ENCODE measurements at regions of chr5 and their contacts with region 1.

Region 1: GRCh38 chr5:149035372-149035790 is 27.5 kb downstream of the SH3TC2 start:
- DNase-seq: peak; percentile 74 to 83
- ATAC-seq: peak; percentile 91 to 98 (median 94)
- H3K4me3 ChIP-seq: no peak overlapping the region
- H3K27ac ChIP-seq: no peak overlapping the region
- H3K4me1 ChIP-seq: peaks cover 4% of the 10 kb centered on the region
- H3K27me3 ChIP-seq: no peaks in the 10 kb centered on the region
- CTCF ChIP-seq: peak; percentile 92

Region 2: DNA sequence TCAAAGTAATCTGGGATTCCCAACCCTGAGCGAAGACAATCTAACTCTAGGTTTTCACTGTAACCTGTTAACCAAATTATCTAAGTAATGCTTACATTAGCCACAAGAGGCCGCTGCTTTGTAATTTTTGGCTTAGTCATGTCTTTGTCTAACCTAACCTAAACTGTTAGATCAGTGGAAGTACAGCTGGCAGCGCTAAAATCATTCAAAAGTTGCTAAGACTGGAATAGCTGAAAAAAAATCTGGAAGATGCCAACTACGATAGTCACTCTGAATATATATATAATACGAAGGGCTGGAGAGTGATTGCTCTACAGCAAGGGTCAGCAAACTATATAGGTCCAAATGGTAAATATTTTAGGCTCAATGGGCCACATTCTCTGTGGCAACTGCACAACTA is 591.4 kb before region 1 on chr5:
- intact Hi-C with region 1: loop called (anchors 5 to 10 kb)
- DNase-seq: no peak
- ATAC-seq: peak; percentile 74 to 96 (median 86)
- H3K4me3 ChIP-seq: no peak overlapping the region
- H3K27ac ChIP-seq: no peak overlapping the region
- H3K4me1 ChIP-seq: peaks cover 4% of the 10 kb centered on the region
- H3K27me3 ChIP-seq: no peaks in the 10 kb centered on the region
- CTCF ChIP-seq: peak; percentile 80

Region 3: GRCh38 chr5:148740966-148741742 is 294.2 kb before region 1 on chr5:
- intact Hi-C with region 1: loop called in 1 of 2 experiments (anchors 2 kb)
- DNase-seq: no peak
- ATAC-seq: peak; percentile 90 to 95 (median 91)
- H3K4me3 ChIP-seq: peak overlapping the region; percentile 39
- H3K27ac ChIP-seq: peak overlapping the region; percentile 56
- H3K4me1 ChIP-seq: peaks cover 8% of the 10 kb centered on the region
- H3K27me3 ChIP-seq: no peaks in the 10 kb centered on the region
- CTCF ChIP-seq: peak; percentile 82

Region 4: GRCh38 chr5:148912714-148913398 is 122.5 kb before region 1 on chr5:
- intact Hi-C with region 1: loop called in 1 of 2 experiments (anchors 5 kb)
- DNase-seq: no peak
- ATAC-seq: peak in 3 of 4 donors; percentile 44 to 67 (median 66)
- H3K4me3 ChIP-seq: no peak overlapping the region
- H3K27ac ChIP-seq: no peak overlapping the region
- H3K4me1 ChIP-seq: peaks cover 15% of the 10 kb centered on the region
- H3K27me3 ChIP-seq: no peaks in the 10 kb centered on the region
- CTCF ChIP-seq: peak; percentile 39

Region 5: DNA sequence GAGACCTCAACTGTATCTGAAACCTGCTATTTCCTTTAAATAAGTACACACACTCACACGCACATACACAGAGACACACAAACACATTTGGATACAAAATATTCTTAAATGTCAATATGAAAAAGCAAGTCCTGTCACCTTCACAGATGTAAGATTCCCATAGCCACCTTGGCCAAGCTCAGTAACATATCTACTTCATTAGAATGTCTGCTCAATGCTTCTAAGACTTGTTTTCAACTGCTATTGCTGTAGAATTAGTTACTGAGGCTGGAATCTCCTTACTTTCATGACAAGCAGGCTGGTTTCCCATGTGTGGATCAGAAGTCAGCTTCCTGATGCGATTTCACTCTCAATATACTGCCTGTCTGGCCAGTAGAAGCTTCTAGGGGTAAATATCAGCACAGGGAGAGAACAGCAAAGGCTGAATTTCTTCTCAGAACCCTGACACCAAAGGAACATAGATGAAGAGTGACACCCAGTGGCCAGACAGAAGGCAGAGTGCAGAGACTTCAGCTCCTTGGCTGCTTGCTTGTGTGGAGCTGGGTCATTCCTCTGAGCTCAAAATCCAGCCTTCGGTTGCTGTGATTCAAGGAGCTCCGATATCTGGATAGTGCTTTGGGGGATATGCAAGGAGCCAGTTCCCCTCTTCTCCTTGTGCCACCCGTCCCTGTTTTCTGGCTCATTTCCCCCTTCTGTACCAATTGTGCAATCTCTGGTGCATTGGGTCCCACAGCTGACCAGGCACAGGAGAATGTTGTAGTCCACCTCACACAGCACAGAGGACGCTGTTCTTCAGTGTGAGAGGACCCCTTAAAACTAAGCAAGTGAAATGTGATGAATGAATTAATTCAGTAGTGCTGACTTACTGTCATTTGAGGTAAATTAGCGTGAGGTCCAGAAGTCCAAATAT is 79.3 kb after region 1 on chr5:
- intact Hi-C with region 1: loop called (anchors 2 to 5 kb)
- DNase-seq: peak in 1 of 2 donors; percentile 57
- ATAC-seq: peak; percentile 88 to 98 (median 94)
- H3K4me3 ChIP-seq: no peak overlapping the region
- H3K27ac ChIP-seq: no peak overlapping the region
- H3K4me1 ChIP-seq: no peaks in the 10 kb centered on the region
- H3K27me3 ChIP-seq: no peaks in the 10 kb centered on the region
- CTCF ChIP-seq: peak; percentile 79

Measured in psoas muscle (tissue), 8 donors.